Esophagus squamous epithelium (tissue), 5 donors: ENCODE measurements at regions of chr1 and their contacts with region 1.

Region 1: DNA sequence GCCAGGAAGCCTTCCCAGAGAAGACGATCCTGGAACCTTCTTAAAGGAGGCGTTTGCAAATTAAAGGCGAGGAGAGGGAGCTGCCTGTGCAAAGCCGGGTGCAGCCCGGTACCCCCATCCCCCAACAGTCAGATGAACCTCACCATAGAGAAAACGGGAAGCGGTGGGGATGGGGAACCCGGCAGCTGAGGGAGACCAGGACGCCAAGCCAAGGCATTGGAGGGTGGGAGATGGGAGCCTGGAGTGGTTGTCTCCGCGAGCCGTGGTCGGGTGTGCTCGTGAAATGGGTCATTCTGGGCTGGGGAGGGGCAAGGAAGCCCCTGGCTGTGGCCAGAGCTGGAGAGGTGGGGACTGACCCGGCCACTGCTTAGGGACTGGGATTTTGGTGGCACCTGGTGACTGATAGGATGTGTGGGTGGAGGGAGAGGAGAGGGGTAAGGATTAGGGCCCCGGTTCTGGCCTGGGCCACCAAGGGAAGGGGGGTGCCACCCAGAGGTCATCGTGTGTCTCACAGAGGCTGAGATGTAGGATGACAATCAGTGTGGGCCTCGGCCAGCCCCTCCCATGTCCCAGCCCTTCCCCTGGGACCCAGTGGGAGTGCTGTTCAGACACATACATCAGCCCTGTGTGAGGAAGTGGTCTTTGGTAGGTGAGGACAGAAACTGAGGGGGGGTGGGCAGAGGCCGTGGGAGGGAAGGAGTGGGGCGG is 676 bp upstream of the PADI2 start:
- DNase-seq: no peak
- H3K4me3 ChIP-seq: peak overlapping the region in 3 of 4 donors; percentile 16 to 57 (median 38)
- H3K27ac ChIP-seq: no peak overlapping the region
- H3K4me1 ChIP-seq: peaks cover 13 to 25% (median 14%) of the 10 kb centered on the region in 3 donors
- H3K27me3 ChIP-seq: peaks cover 0 to 60% (median 9%) of the 10 kb centered on the region in 4 donors
- CTCF ChIP-seq: no peak
- POLR2A ChIP-seq: no peak

Region 2: DNA sequence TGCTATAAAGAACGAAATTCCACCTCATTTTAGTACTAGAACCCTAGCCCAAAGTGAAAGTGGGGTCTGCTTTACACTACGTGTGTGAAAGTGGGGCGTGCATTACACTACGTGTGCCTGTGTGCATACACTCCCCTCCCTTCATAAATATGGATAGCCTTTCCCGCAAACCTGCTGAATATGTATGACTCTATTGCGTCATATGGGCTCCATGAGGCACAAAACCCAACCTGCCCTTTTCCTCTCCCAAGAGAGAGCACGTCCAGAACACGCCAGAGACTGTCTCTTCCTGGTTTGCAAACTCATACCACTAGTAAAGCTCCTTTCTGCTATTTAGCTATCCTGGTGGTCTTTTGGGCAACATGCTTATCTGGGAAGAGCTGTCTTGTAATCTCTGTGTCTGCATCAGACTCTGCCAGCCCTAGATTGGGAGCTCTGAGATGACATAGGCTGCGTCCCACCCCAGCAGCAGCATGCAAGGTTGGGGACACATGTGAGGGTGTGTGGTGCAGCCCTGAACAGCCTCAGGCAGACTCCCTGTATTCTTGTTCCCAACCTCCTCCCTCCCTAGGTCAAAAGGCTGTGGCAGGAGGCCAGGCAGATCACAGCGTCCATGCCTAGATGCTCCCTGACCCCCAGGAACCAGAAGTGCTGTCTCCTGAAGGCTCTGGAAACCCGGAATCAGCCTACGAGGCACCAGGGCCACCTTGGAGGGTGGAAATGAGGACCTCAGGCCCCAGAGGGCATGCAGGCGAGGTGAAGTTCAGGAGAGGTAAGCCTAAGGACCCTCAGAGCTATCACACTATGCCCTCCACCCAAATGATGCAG is 72.7 kb after region 1 on chr1:
- intact Hi-C with region 1: no loop called
- DNase-seq: no peak
- H3K4me3 ChIP-seq: no peak overlapping the region
- H3K27ac ChIP-seq: peak overlapping the region; percentile 81 to 89 (median 84)
- H3K4me1 ChIP-seq: peaks cover 9 to 51% (median 21%) of the 10 kb centered on the region in 3 donors
- H3K27me3 ChIP-seq: peaks cover 0 to 7% (median 0%) of the 10 kb centered on the region in 4 donors
- CTCF ChIP-seq: no peak
- POLR2A ChIP-seq: no peak

Region 3: GRCh38 chr1:17236779-17237560 is 117.0 kb after region 1 on chr1:
- intact Hi-C with region 1: loop called (anchors 5 kb)
- DNase-seq: no peak
- H3K4me3 ChIP-seq: no peak overlapping the region
- H3K27ac ChIP-seq: peak overlapping the region in 1 of 4 donors; percentile 42
- H3K4me1 ChIP-seq: peaks cover 6 to 43% (median 13%) of the 10 kb centered on the region in 3 donors
- H3K27me3 ChIP-seq: peaks cover 0 to 13% (median 0%) of the 10 kb centered on the region in 4 donors
- CTCF ChIP-seq: peak; percentile 80 to 94 (median 86)
- POLR2A ChIP-seq: no peak